ENCODE measurements at regions of chr15 and their contacts with region 1.

Region 1: GRCh38 chr15:72473614-72474465 is at the start of gene ARIH1:
- DNase-seq: peak; percentile 98
- ATAC-seq: peak; percentile 72
- H3K4me3 Mint-ChIP-seq: peak within 1 kb of the TSS; percentile 97
- H3K27ac Mint-ChIP-seq: peak within 1 kb of the TSS; percentile 99
- H3K4me1 Mint-ChIP-seq: peaks cover 39% of the 10 kb centered on the region
- H3K27me3 Mint-ChIP-seq: no peaks in the 10 kb centered on the region
- CTCF ChIP-seq: no peak
- total RNA-seq, gene ARIH1: 142 and 159 TPM in 2 replicates

Region 2: GRCh38 chr15:72117486-72118399 is 356.1 kb before region 1 on chr15 and contains the start of gene MYO9A:
- CTCF ChIA-PET with region 1: no interaction called
- POLR2A ChIA-PET with region 1: interaction called, 4 read pairs
- intact Hi-C with region 1: loop called (anchors 1 kb)
- DNase-seq: peak; percentile 93
- ATAC-seq: peak; percentile 74
- H3K4me3 Mint-ChIP-seq: peak within 1 kb of the TSS; percentile 99
- H3K27ac Mint-ChIP-seq: peak within 1 kb of the TSS; percentile 99
- H3K4me1 Mint-ChIP-seq: peaks cover 33% of the 10 kb centered on the region
- H3K27me3 Mint-ChIP-seq: no peaks in the 10 kb centered on the region
- CTCF ChIP-seq: no peak
- total RNA-seq, gene MYO9A: 39.4 and 50.6 TPM in 2 replicates

Region 3: DNA sequence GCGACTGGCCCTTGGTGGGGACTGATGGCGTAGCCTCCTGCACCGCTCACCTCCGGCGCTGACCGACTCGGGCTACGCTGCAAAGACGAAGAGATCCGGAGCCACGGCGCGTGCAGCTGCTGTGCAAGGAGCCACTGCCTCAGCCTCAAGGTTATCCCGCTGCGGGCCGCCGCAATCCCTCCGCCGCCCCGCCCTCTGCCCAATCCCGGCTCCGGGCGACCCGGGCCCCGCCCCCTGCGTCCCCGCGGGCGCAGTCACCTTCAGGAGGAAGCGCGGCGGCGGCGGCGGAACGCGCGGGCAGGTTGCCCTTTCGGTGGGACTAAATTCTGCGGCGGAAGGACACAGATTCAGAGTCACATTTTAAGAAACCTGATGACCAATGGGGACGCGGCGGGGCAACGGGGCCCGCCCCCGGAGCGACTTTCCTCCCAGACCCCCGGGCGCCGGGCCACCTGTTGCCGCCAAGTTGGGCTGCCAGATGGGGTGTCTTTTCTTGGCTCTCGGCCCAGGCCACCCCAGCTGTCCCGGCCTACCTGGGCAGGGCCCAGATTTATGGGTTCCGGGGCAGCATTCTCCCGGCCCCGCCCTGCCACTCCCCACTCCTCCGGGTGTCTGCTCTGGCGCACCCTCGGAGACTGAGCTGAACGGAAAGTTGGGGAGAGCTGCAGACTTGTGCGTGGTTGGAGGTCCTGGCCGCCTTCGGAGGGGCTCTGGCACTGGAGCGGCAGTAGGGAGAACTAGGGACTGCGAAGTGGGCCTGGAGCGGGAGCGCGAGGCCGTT is 242.6 kb before region 1 on chr15 and contains the start of gene PKM:
- CTCF ChIA-PET with region 1: interaction called, 3 read pairs
- POLR2A ChIA-PET with region 1: interaction called, 28 read pairs
- intact Hi-C with region 1: loop called (anchors 1 kb)
- DNase-seq: peak; percentile 92
- ATAC-seq: peak; percentile 38
- H3K4me3 Mint-ChIP-seq: peak within 1 kb of the TSS; percentile 99
- H3K27ac Mint-ChIP-seq: peak within 1 kb of the TSS; percentile 98
- H3K4me1 Mint-ChIP-seq: peaks cover 41% of the 10 kb centered on the region
- H3K27me3 Mint-ChIP-seq: no peaks in the 10 kb centered on the region
- CTCF ChIP-seq: no peak
- total RNA-seq, gene PKM: 1,253 and 1,275 TPM in 2 replicates

Region 4: DNA sequence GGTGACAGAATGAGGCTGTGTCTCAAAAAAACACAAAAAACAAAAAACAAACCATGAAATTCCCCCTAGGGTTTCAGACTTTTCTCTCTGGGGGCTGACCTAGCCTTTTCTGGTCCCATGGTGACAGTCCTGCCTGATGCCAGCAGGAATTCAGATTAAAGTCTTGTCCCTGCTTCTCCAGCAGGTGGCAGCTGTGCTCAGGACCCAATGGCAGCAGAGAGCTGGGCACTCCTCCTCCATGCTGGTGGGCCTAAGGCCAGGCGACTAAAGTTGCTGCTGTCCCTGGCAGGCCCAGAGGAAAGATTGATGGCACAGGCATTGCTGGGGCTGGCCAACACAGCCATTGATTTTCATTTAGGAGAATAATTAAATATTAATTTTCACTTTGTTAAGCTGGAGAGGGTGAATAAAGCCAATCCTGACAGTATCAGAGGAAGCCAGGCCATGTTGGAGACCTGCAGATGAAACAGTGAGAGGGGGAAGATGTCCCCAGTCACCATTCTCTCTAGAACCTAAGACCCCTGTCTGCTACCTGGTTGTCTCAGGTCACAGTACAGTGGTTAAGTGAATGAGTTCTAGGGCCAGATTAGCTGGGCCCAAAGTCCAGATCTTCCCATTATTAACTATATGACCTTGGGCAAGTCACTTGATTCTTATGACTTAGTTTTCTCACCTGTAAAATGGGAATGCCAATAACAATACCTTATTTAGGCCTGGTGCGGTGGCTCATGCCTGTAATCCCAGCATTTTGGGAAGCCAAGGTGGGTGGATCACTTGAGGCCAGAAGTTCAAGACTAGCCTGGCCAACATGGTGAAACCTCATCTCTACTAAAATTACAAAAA is 161.0 kb before region 1 on chr15:
- CTCF ChIA-PET with region 1: no interaction called
- POLR2A ChIA-PET with region 1: interaction called, 4 read pairs
- intact Hi-C with region 1: loop called (anchors 2 kb)
- DNase-seq: peak; percentile 24
- ATAC-seq: peak; percentile 96
- H3K4me3 Mint-ChIP-seq: no peak overlapping the region
- H3K27ac Mint-ChIP-seq: no peak overlapping the region
- H3K4me1 Mint-ChIP-seq: no peaks in the 10 kb centered on the region
- H3K27me3 Mint-ChIP-seq: no peaks in the 10 kb centered on the region
- CTCF ChIP-seq: no peak

Region 5: GRCh38 chr15:72375847-72376581 is 97.8 kb before region 1 on chr15 and contains the start of gene HEXA:
- CTCF ChIA-PET with region 1: no interaction called
- POLR2A ChIA-PET with region 1: interaction called, 59 read pairs
- intact Hi-C with region 1: loop called (anchors 1 kb)
- DNase-seq: peak; percentile 99
- ATAC-seq: peak; percentile 83
- H3K4me3 Mint-ChIP-seq: peak within 1 kb of the TSS; percentile 91
- H3K27ac Mint-ChIP-seq: peak within 1 kb of the TSS; percentile 97
- H3K4me1 Mint-ChIP-seq: peaks cover 58% of the 10 kb centered on the region
- H3K27me3 Mint-ChIP-seq: no peaks in the 10 kb centered on the region
- CTCF ChIP-seq: no peak
- total RNA-seq, gene HEXA: 100 and 102 TPM in 2 replicates

Region 6: DNA sequence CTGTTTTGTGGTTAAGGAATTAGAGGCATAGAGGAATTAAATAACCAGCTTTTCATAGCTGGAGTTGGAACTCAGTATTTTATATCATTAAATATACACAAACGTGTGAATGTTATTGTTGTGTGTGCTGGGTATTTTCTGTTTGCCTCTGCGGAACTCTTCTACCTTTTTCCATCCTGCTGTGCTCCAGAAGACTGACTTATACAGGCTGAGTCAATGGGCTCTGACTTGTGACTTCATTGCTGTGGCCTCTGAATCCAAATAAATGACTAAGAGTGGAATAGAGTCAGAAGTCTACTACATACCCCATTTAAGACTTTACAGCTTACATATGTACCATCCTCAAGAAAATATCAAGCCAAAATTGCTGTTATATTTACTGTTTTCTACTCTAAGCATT is 17.9 kb after region 1 on chr15:
- CTCF ChIA-PET with region 1: no interaction called
- POLR2A ChIA-PET with region 1: interaction called, 18 read pairs
- intact Hi-C with region 1: no loop called
- DNase-seq: no peak
- ATAC-seq: no peak
- H3K4me3 Mint-ChIP-seq: no peak overlapping the region
- H3K27ac Mint-ChIP-seq: no peak overlapping the region
- H3K4me1 Mint-ChIP-seq: peaks cover 56% of the 10 kb centered on the region
- H3K27me3 Mint-ChIP-seq: no peaks in the 10 kb centered on the region
- CTCF ChIP-seq: no peak

Measured in activated B cell treated with CpG ODN at 0.5 μM for 24 hours (primary cell).